Astrocyte of the cerebellum (primary cell): ENCODE measurements at regions of chr11 and their contacts with region 1.

Region 1: GRCh38 chr11:3903207-3903896 is 47.9 kb downstream of the STIM1 start:
- DNase-seq: no peak
- H3K4me3 ChIP-seq: no peak overlapping the region
- CTCF ChIP-seq: no peak

Region 2: DNA sequence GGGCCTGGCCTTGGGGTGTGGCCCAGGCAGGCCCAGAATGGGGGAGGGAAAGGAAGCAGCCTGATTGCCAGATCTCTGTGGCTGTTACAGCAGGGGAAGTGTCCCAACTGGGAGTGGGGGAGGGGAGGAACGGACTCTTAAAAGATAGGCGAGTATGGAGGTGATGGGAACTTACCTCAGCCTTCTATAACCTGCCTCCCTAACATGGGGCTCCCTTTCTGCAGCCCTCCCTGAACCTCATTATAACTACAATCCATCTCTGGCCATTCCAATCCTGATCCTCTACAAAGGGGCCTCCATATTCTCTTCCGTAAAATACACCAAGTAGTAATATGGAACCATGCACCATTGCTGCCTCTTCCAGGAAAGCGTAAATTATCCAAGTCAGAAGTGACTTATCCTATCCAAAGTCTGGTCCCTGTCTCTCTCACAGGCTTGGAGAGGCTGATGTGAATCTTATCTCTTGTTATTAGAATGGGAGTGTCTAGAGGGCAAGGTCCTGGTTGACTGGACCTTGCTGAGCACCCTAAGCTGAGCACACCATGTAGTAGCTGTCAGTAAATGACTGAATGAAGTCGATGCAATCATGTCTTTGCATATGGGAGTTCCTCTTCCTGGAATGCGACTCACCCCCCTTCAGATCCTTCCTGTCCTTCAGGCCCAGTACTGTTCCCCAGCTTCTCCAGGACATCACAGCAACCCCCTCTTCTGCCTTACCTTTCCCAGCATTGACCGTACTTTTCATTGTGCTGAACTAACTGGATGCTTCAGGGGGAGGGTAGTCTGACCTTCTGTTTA is 68.5 kb before region 1 on chr11:
- in situ Hi-C with region 1: no loop called
- DNase-seq: no peak
- H3K4me3 ChIP-seq: no peak overlapping the region
- CTCF ChIP-seq: no peak

Region 3: GRCh38 chr11:3950996-3951660 is 47.8 kb after region 1 on chr11:
- in situ Hi-C with region 1: loop called (anchors 5 kb)
- DNase-seq: peak; percentile 73
- H3K4me3 ChIP-seq: no peak overlapping the region
- CTCF ChIP-seq: no peak